Cardiac septum (tissue), 1 donor: ENCODE measurements at regions of chr1 and their contacts with region 1.

Region 1: GRCh38 chr1:6438047-6438525 is 13.5 kb downstream of the ESPN start:
- DNase-seq: peak; percentile 83

Region 2: DNA sequence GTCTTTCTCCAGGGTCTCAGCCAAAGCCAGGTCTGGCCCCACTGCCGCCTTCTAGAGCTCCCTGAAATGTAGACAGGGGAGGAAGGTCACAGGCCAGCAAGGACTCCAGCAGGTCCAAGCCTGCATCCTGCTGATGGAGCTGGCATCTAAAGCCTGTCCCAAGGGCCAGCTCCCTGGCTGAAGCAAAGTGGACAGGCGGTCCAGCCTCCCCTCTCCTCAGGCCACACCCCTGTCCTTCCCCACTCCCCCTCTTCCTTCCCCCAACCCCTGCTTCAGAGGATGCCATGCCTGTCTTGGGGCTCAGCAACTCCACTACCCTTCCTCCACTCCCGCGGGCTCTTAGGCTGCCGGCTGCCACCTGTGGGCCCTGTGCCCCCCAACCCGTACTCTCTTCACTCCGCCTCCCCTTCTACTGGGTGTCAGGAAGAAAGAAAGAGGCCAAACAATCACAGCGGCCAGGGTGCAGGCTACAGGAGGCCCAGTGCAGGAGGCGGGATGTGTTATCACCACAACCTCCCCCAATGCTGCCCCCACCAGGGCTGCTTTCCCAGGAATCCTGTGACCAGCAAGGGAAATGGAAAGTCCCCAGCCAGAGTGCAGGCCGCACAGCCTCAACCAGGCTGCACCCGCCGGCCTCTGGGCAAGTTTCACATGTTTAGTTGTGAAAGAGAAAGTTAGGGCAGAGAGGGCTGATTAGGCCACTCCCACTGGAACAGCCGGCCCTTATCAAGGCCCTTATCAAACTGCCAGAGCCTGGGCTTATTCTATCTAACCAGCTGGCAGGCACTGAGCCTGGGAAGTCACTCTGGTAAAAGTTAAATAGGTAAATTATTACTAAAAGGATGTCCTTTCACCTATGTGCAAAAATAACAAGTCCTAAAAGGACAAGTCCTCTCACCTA is 78.6 kb before region 1 on chr1:
- intact Hi-C with region 1: loop called (anchors 5 kb)
- DNase-seq: peak; percentile 83